ENCODE measurements at regions of chr14 and their contacts with region 1.

Region 1: DNA sequence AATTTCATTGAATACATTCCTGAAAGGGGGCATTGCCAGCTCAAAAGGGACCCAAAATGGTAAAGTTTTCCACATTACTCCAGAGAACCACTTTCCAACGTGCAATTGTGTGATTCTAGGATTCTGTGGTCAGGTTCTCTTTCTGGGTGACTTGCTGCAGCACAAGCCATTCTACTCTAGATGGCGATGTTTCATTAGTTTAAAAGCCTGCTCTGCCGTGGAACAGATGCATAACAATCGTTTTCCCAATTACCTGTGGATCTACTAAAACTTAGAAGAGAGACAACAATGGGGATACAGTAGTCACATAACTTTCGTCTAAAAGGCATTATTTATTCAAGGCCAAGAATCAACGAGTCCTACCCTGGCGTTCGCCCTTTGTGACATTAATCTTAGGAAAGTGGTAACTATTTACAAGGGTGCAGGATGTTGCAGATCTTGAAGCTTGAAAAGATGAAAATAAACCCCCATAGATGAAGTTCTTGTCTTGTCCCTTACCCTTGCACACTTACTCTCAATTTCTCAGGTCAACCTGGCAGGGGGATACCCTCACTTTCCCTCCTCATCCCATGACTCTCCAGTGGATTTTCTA is 400.9 kb downstream of the SNAPC1 start:
- DNase-seq: peak in 1 of 2 donors; percentile 71
- H3K4me3 ChIP-seq: no peak overlapping the region
- H3K27ac ChIP-seq: no peak overlapping the region
- H3K4me1 ChIP-seq: no peaks in the 10 kb centered on the region
- H3K27me3 ChIP-seq: peaks cover 0 to 31% (median 0%) of the 10 kb centered on the region in 3 donors
- CTCF ChIP-seq: peak in 4 of 7 experiments; percentile 28 to 52 (median 46)
- EP300 ChIP-seq: no peak
- POLR2A ChIP-seq: no peak

Region 2: DNA sequence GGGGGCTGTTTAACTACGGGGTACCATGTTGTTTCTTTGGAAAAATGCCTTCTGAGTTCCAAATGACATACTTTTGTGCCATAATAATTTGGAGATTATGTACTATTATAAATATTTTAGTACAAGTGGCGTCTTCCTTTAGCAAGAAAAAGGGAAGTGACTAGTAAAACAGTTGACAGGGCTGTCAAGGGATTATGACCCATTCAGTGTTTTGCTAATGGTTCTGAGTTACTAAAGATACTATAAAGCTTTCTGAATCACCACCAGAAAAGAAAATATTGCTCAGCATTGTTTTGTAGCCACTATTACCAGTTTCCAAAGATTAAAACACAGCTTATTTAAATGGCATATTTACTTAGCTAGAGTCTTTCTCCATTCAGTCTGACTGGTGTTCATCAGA is 66.0 kb before region 1 on chr14:
- intact Hi-C with region 1: no loop called
- DNase-seq: no peak
- H3K4me3 ChIP-seq: no peak overlapping the region
- H3K27ac ChIP-seq: no peak overlapping the region
- H3K4me1 ChIP-seq: no peaks in the 10 kb centered on the region
- H3K27me3 ChIP-seq: no peaks in the 10 kb centered on the region
- CTCF ChIP-seq: no peak
- EP300 ChIP-seq: no peak
- POLR2A ChIP-seq: no peak

Region 3: GRCh38 chr14:63039800-63040380 is 876.8 kb after region 1 on chr14:
- intact Hi-C with region 1: loop called (anchors 10 kb)
- DNase-seq: peak in 1 of 2 donors; percentile 73
- H3K4me3 ChIP-seq: no peak overlapping the region
- H3K27ac ChIP-seq: no peak overlapping the region
- H3K4me1 ChIP-seq: peaks cover 0 to 3% (median under 1%) of the 10 kb centered on the region in 4 donors
- H3K27me3 ChIP-seq: peaks cover 0 to 48% (median 10%) of the 10 kb centered on the region in 3 donors
- CTCF ChIP-seq: no peak
- EP300 ChIP-seq: no peak
- POLR2A ChIP-seq: no peak

Measured in stomach (tissue), 19 donors.